ENCODE measurements at regions of chr15 and their contacts with region 1.

Region 1: GRCh38 chr15:65275728-65276126 is 11.0 kb downstream of the PARP16 start:
- DNase-seq: no peak
- H3K4me3 ChIP-seq: no peak overlapping the region
- H3K27ac ChIP-seq: no peak overlapping the region
- H3K4me1 ChIP-seq: no peaks in the 10 kb centered on the region
- H3K27me3 ChIP-seq: no peaks in the 10 kb centered on the region
- CTCF ChIP-seq: no peak

Region 2: DNA sequence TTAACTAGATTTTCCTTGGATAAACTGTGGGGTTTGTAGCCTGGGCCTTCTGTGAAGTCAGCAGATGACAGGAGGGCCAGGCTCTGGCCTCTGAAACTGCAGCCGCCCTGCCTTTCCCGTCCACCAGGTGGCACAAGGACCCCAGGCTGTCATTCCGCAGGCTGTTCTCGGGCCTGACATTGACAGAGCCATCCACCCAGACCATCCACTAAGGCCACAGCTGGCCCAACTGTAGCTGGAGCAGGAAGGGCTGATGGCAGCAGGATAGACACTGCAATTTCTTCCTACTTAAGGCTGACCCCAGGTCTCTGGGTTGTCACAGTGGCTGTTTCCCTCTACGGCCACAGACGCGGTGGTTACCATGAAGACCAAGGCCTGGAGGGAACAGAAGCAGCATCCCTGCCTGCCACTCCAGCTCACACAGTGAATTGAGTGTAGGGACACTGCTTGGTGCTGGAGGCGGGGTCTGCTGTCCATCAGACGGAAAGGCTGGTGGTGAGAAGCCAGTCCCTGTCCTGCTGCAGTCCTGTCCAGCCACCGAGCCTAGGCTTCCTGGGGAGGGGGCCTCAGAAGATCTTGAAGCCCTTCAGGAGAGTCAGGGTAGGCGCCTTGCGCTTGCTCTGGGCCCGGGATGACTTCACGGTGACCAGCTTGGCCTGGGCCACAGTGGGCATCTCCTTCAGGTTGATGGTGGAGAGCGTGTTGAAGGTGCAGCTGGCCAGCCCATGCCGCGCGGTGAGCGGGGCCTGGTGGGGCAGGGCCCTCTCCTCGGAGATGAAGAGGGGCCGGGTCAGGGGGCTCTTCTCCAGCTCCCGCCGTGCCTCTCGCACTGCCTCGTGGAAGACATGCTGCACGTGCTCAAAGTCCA is 221.2 kb before region 1 on chr15:
- CTCF ChIA-PET with region 1: no interaction called
- dilution Hi-C with region 1: no loop called
- in situ Hi-C with region 1: loop called (anchors 25 kb)
- intact Hi-C with region 1: loop called (anchors 1 kb)
- DNase-seq: peak; percentile 46
- H3K4me3 ChIP-seq: no peak overlapping the region
- H3K27ac ChIP-seq: no peak overlapping the region
- H3K4me1 ChIP-seq: peaks cover 11% of the 10 kb centered on the region
- H3K27me3 ChIP-seq: no peaks in the 10 kb centered on the region
- CTCF ChIP-seq: peak; percentile 93 to 96

Region 3: GRCh38 chr15:65192016-65192415 is 83.7 kb before region 1 on chr15:
- CTCF ChIA-PET with region 1: no interaction called
- dilution Hi-C with region 1: no loop called
- in situ Hi-C with region 1: loop called (anchors 5 to 10 kb)
- intact Hi-C with region 1: loop called (anchors 1 kb)
- DNase-seq: no peak
- H3K4me3 ChIP-seq: no peak overlapping the region
- H3K27ac ChIP-seq: no peak overlapping the region
- H3K4me1 ChIP-seq: no peaks in the 10 kb centered on the region
- H3K27me3 ChIP-seq: no peaks in the 10 kb centered on the region
- CTCF ChIP-seq: no peak

Region 4: DNA sequence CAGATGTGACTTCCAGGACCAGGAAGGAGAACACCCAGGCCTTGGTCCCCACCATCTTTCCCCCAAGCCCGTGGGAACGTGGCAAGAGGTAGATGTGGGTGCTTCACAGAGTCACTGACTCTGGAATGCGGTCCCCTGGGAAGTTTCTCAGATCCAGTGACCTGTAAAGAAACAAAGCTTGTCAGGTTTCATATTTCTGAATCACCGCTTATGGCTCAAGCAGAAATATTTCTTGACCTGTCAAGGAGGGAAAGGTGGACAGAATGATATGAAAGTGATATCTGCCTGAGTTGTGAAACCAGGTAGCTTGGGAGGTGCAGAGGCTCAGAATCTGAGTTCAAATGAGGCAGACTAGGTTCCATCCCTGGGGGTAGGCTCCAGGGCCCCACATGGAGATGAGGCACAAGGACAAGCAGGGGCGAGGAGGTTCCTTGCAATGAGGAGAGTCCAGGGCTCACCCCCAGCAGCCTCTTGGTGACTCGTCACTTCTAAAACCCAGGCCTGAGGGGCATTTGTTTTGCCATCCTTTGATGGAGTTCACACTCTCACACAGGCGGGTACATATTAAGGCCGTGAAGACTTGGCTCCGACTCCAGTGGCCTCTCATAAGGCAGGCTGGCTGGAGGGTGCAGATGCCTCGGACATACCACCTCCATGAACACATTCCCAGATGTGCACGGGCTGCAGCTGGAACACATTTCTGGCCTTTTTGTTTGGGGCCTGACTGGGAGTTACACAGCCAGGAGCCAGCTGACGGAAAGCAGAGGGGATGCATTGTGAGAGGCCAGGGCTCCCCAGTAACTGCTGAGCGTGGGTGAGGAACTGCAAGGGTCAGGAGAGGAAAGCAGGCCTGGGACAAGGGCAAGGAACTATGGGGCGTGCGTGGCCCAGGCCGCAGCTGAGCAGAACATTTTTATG is 65.8 kb before region 1 on chr15:
- CTCF ChIA-PET with region 1: no interaction called
- dilution Hi-C with region 1: loop called (anchors 5 kb)
- in situ Hi-C with region 1: no loop called
- intact Hi-C with region 1: no loop called
- DNase-seq: no peak
- H3K4me3 ChIP-seq: no peak overlapping the region
- H3K27ac ChIP-seq: no peak overlapping the region
- H3K4me1 ChIP-seq: no peaks in the 10 kb centered on the region
- H3K27me3 ChIP-seq: no peaks in the 10 kb centered on the region
- CTCF ChIP-seq: no peak

Region 5: DNA sequence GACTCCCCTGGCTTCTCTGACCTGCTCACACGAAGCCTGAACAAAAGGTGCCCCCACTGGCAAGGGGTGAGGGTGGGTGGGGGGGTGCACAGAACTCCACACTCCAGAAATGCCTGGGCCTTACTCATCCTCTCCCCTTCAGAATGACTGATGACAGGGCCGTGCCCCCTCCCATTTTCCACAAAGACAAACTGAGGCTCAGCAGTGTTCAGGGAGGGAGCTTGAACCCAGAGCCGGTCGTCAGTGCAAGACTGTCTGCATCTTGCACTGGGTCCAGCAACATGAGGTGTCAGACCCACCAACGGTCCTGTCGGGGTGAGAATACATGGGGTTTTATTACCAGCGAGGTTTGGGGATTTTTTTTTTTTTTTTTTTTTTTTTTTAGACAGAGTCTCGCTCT is 86.8 kb after region 1 on chr15:
- CTCF ChIA-PET with region 1: interaction called, 24 read pairs
- dilution Hi-C with region 1: no loop called
- in situ Hi-C with region 1: no loop called
- intact Hi-C with region 1: no loop called
- DNase-seq: no peak
- H3K4me3 ChIP-seq: no peak overlapping the region
- H3K27ac ChIP-seq: no peak overlapping the region
- H3K4me1 ChIP-seq: no peaks in the 10 kb centered on the region
- H3K27me3 ChIP-seq: no peaks in the 10 kb centered on the region
- CTCF ChIP-seq: no peak

Region 6: GRCh38 chr15:65869127-65869953 is 593.6 kb after region 1 on chr15 and contains the start of gene RAB11A:
- CTCF ChIA-PET with region 1: interaction called, 10 read pairs
- dilution Hi-C with region 1: no loop called
- in situ Hi-C with region 1: no loop called
- intact Hi-C with region 1: no loop called
- DNase-seq: peak; percentile 93
- H3K4me3 ChIP-seq: peak within 1 kb of the TSS; percentile 64 to 96 (median 65)
- H3K27ac ChIP-seq: peak within 1 kb of the TSS; percentile 74
- H3K4me1 ChIP-seq: peaks cover 12% of the 10 kb centered on the region
- H3K27me3 ChIP-seq: no peaks in the 10 kb centered on the region
- CTCF ChIP-seq: peak in 1 of 2 donors; percentile 29
- total RNA-seq, gene RAB11A: 215 to 220 TPM

Measured in mammary epithelial cell (primary cell).